GM10248 (cell line): ENCODE measurements at regions of chr1 and their contacts with region 1.

Region 1: GRCh38 chr1:156728597-156729462 is at the start of gene ISG20L2:
- DNase-seq: peak; percentile 94
- CTCF ChIP-seq: no peak

Region 2: DNA sequence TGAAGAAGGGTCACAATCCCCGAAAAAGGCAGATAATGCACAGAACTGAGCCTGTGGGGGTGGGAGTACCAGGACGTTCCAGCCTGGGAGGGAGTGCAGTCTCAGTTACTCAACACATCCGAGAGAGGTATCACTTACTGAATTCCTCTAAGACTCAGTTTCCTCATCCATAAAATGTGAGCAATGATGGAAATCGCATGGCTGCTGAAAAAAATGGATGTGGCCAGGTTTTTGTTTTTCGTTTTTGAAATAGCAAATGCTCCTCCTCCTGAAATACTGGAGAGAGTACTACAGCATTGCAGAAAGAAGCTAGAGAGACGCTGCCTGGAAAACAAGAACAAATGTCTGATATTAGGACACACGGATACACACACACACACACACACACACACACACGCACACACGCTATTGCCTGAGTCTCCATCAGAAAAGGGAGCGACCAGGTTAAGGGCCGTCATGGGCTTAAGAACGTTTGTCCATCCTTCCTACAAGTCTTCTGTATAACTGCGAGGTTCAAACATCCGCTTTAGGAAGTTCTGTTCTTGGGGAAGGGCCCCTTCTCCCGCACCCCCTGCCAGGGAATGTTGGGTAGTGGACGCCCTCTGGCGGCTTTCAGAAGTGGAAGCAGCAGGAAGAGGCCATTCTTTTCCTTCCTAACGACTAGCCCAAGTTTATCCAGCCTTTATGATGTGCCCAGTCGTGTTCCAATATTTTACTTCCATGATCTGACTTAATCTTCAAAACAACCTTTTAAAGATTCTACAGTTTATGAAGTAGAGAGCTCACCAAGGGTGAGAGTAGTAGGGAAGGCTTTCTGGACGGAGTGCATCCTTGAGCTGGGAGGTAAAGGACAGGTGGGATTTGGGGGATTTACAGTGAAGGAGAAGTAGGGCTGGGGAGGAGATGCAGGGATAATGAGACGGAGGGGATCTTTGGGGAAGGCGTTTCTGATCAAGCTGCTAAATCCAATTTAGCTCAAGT is 50.9 kb before region 1 on chr1:
- CTCF ChIA-PET with region 1: interaction called, 597 read pairs
- POLR2A ChIA-PET with region 1: no interaction called
- DNase-seq: peak; percentile 66
- CTCF ChIP-seq: peak; percentile 83

Region 3: DNA sequence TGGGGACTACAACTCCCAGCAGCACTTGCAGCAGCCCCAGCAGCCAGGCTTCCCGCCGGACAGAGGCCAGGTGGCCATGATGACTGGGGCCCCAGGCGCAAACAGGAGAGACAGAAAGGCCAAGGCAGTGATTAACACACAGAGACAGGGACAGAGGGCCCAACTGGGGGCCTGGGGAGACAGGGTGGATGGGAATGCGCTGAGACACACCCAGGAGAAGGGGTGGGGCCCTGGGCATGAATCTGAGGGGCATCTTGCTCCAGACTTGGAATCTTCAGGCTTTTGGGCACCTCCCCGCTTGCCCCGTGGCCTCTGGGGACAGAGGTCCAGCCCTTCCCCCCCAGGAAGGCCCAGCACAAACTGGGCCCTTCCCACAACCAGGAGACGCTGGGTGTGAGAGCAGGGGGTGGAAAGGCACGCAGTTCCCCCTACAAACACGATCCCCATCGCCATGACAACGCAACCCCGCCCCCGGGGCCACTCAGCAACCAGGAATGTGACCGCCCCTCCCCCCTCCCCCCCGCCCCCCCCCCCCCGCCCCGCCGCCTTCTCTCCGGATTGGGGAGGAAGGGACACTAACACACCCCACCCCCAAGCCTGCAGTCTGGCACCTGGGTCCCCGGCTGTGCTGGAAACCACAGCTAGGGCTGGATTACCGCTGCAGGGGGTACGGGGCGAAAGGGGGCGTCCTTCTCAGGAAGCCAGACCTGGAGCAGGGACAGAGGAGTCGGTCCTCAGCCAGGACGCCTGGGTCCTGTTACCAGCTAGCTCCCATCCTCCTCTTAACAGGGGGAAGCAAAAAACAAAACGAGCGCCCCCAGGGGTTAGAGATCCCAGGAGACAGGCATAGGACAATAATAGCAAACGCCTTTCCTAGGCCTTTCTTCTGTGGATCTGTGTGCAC is 18.1 kb after region 1 on chr1:
- CTCF ChIA-PET with region 1: interaction called, 64 read pairs
- POLR2A ChIA-PET with region 1: interaction called, 5 read pairs
- DNase-seq: peak; percentile 62
- CTCF ChIP-seq: no peak

Region 4: DNA sequence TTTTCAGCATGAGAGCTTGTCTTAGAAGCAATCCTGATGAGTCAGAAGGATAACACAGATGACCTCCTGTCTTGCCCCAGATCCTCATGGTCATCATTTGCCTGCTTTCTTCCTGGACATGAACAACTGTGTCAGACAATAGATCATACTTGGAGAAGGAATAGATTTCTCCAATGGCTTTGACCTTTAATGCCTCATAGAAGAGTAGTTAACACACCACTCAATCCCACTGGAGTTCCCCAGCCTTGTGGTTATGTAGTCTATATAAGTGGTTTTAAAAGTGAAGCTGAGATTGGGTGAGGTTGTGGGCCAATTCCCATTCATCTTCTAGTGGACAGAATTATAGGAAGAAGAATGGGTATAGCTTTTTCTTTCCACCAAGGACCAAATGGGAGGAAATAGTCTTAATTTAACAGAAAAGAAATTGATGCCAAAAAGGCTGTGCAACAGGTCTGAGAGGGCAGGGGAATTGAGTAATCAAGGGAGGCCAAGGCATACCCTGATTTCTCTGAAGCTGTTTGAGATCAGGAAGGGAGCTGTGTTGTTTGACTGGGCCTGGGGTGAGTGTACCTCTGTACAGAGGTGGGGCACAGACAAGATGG is 52.9 kb after region 1 on chr1:
- CTCF ChIA-PET with region 1: interaction called, 15 read pairs
- POLR2A ChIA-PET with region 1: interaction called, 3 read pairs
- DNase-seq: no peak
- CTCF ChIP-seq: no peak

Region 5: GRCh38 chr1:156838981-156839410 is 110.2 kb after region 1 on chr1:
- CTCF ChIA-PET with region 1: interaction called, 23 read pairs
- POLR2A ChIA-PET with region 1: interaction called, 4 read pairs
- DNase-seq: peak; percentile 75
- CTCF ChIP-seq: peak; percentile 86